ENCODE measurements at regions of chr17 and their contacts with region 1.

Region 1: DNA sequence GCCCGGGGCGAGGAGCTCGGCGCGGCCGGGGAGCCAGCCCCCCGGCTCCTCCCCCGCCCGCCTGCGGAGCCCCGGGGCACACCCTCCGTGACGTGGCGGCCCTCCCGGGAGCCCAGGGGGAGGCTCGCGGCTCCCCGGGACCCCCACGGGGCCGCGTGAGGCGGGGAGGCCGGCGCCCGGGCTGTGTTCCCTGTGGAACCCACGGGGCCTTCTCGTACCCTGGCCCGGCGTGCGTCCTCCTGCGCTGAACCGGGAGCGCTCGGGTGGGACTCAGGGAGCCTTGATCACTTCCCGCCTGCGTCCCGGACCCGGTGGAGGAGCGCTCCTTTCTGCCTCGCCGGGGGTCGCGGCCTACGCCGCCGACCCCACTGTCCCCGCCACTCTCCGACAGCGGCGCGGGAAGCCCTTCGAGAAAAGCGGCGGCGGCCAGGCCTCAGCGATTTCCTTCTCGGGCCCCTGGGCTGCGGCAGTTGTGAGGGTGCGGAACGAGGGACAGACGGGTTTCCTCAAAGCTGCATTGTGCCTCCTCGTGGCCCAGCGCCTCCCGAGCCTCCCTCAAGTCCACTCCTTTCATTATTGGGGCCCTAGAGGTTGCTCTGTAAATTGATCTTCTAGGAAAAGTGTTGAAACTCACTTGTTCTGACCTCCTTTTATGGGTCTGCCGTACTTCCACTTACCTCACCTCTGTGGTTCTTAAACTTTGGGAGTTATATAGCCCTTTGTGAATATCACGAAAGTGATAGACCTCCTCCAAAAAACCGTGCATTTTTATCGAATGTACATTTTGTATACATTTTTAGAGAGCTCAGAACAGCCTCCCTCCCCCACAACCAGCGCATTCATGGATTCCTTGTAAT is 597 bp downstream of the LIG3 start:
- DNase-seq: peak; percentile 83
- H3K4me3 Mint-ChIP-seq: peak overlapping the region; percentile 75
- H3K27ac Mint-ChIP-seq: peak overlapping the region; percentile 89
- H3K4me1 Mint-ChIP-seq: peaks cover 27% of the 10 kb centered on the region
- H3K27me3 Mint-ChIP-seq: no peaks in the 10 kb centered on the region
- CTCF ChIP-seq: peak; percentile 39

Region 2: DNA sequence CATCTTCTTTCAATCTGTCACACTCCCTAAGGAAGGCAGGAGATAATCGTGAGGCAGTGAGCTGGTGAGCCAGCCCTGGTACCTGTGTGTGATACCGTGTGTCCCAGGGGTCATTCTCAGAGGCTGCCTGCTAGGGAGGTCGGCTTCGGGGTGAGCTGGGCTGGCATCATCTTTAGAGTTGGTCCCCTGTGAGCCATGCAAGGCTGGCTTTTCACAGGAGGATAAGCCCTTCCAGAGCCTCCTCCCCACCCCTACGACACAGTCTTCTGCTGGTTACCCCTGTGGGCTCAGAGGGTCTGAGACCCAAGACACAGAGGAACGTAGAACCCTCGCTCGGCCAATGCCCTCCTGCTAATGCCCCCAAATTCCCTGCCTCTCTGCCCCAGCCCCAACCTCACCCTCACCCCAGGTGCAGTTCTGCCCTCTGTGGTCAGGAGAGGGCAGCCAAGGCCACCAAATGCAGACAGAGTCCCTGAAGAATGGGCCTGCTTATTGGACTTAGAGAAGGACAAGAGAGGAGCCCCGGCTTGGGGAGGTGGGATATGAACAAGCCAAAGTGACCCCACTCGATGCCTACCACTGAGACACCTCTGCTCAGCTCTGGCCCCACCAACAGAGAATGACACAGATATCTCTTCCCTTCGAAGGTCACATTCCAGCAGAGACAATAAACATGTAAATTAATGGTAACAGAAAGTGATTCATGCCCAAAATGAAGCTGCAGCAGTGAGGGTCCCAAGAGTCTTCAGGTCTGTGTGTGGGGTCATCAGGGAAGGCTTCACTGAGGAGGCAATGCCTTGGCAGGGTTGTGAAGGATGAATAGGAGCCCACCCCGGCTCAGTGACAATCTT is 537.1 kb before region 1 on chr17:
- CTCF ChIA-PET with region 1: interaction called, 3 read pairs
- POLR2A ChIA-PET with region 1: no interaction called
- intact Hi-C with region 1: loop called (anchors 5 kb)
- DNase-seq: no peak
- H3K4me3 Mint-ChIP-seq: no peak overlapping the region
- H3K27ac Mint-ChIP-seq: no peak overlapping the region
- H3K4me1 Mint-ChIP-seq: no peaks in the 10 kb centered on the region
- H3K27me3 Mint-ChIP-seq: no peaks in the 10 kb centered on the region
- CTCF ChIP-seq: peak; percentile 36

Region 3: DNA sequence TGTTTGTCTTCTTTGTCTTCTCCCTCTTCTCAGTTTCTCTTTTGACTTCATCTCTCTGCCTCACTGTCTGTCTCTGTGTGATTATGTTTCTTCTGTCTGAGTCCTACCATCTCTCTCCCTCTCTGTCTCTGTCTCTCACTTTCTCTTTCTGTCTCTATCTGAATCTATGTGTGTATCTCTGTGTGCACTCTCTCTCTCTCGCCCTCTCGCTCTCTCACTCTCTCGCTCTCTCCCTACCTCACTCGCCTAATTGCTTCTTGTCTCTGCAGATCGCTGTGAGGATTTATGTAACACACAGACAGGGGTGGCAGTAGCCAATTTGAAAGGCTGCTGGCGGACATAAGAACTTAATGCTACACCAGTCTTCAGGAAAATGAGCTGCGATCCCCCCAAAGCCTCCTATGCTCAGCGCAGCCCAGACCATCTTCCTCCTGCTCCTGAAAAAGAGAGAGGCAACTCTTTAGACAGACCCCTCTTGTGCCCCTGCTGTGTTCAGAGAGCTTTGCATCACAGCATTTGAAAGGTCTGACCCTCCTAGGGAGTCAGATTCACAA is 160.6 kb before region 1 on chr17:
- CTCF ChIA-PET with region 1: no interaction called
- POLR2A ChIA-PET with region 1: no interaction called
- intact Hi-C with region 1: no loop called
- DNase-seq: no peak
- H3K4me3 Mint-ChIP-seq: no peak overlapping the region
- H3K27ac Mint-ChIP-seq: no peak overlapping the region
- H3K4me1 Mint-ChIP-seq: no peaks in the 10 kb centered on the region
- H3K27me3 Mint-ChIP-seq: no peaks in the 10 kb centered on the region
- CTCF ChIP-seq: no peak

Region 4: GRCh38 chr17:34961093-34961911 is 19.6 kb before region 1 on chr17 and contains the starts of genes CCT6B and ZNF830:
- CTCF ChIA-PET with region 1: interaction called, 9 read pairs
- POLR2A ChIA-PET with region 1: interaction called, 53 read pairs
- intact Hi-C with region 1: loop called (anchors 1 kb)
- DNase-seq: peak; percentile 95
- H3K4me3 Mint-ChIP-seq: peak within 1 kb of the TSS; percentile 93
- H3K27ac Mint-ChIP-seq: peak within 1 kb of the TSS; percentile 100
- H3K4me1 Mint-ChIP-seq: peaks cover 16% of the 10 kb centered on the region
- H3K27me3 Mint-ChIP-seq: no peaks in the 10 kb centered on the region
- CTCF ChIP-seq: no peak
- total RNA-seq, gene CCT6B: 4.6 and 5.7 TPM in 2 replicates
- total RNA-seq, gene ZNF830: 21.6 and 26.3 TPM in 2 replicates

Region 5: DNA sequence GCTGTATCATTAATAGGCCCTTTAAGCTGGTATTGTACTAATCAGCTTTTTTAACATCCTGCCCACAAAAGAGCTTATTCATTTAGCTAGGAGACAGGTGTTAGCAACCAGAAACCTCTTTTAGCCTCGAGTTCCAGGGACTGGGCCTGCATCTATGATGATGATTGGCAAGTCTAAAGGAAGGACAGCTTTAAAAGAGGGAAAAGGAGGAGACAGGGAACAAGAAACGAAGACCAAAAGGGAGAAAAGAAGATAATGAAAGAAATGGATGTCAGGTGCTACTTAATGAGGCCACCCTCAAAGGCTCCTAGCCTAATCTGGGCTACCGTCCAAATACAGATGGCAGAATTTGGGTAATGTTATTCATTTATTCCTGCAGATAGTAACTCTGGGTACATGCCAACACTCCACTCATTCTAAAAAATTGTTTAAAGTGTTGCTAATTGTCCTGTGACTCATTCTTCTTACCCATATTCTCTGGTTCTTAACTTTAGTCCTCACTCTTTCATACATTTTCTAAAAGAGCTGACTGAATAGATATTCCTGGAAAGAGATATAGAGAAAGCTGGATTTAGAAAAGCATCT is 101.3 kb after region 1 on chr17:
- CTCF ChIA-PET with region 1: interaction called, 3 read pairs
- POLR2A ChIA-PET with region 1: interaction called, 28 read pairs
- intact Hi-C with region 1: loop called (anchors 5 kb)
- DNase-seq: peak; percentile 93
- H3K4me3 Mint-ChIP-seq: no peak overlapping the region
- H3K27ac Mint-ChIP-seq: no peak overlapping the region
- H3K4me1 Mint-ChIP-seq: peaks cover 25% of the 10 kb centered on the region
- H3K27me3 Mint-ChIP-seq: no peaks in the 10 kb centered on the region
- CTCF ChIP-seq: no peak

Measured in MCF 10A (cell line).